PC-9 (cell line): ENCODE measurements at regions of chr18 and their contacts with region 1.

Region 1: DNA sequence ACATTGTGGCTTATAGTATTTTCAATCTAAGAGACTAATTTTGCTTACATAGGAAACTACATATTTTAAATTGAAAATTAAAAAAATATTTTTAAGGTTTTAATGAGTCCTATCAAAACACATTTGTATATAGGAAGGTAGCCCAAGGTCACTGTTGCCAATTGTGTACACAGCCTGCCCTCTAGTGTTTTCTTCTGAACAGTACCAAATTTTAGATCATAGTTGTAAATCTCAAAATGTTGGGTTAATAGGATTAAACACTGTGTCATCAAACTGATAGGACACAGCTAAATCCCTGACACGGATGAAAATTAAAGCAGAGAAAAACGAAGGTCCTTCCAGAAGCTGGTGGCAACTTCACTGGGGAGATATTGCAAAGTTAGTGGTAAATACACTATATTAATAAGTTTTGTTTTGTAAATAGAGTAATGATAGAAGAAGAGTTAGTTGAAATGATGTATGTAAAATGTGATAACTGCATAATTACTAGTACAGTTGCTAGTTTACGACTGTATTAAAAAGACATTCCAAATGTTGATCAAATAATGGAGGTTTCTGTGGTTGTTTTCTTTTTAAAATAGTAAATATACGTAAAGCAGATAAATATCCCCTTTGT is 19.7 kb downstream of the CLUL1 start:
- DNase-seq: no peak
- H3K4me3 ChIP-seq: no peak overlapping the region
- H3K27ac ChIP-seq: no peak overlapping the region
- H3K4me1 ChIP-seq: no peaks in the 10 kb centered on the region
- H3K27me3 ChIP-seq: peaks cover 44% of the 10 kb centered on the region
- CTCF ChIP-seq: peak; percentile 81

Region 2: DNA sequence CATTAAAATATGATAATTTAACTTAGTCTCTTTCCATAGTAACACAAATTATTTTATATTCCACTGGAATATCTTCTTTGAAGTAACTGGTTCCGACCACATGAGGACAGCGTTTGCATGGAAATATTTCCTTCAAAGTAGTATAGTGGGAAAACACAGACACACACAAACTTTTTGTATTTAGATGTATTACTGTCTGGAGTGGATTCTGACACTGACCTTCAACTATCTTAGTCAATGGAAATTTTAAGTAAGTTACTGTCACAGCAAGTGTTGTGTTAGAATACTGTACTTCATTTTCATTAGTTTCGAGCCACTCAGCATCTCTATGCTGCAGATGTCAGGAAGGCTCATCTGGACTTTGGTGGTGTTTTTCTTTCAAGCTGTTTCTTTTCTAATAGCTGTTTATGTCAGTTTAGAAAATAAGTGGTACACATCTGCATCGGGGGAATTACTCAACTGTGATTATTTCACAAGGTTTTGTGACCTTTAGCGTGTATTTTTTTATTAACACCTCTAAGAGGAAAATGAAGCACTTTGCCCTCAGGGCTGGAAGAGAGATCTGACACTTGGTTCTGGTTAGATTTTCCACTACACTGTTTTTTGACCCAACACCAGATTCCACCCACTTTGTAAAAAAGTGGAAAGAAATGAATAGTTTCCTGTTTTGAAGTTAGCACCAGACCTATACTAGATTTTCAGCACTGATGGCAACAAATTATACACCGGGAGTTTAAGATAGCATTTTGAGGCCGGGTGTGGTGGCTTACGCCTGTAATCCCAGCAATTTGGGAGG is 329.8 kb before region 1 on chr18:
- CTCF ChIA-PET with region 1: no interaction called
- POLR2A ChIA-PET with region 1: no interaction called
- intact Hi-C with region 1: loop called (anchors 5 kb)
- DNase-seq: no peak
- H3K4me3 ChIP-seq: no peak overlapping the region
- H3K27ac ChIP-seq: no peak overlapping the region
- H3K4me1 ChIP-seq: no peaks in the 10 kb centered on the region
- H3K27me3 ChIP-seq: peaks cover 79% of the 10 kb centered on the region
- CTCF ChIP-seq: peak; percentile 46

Region 3: DNA sequence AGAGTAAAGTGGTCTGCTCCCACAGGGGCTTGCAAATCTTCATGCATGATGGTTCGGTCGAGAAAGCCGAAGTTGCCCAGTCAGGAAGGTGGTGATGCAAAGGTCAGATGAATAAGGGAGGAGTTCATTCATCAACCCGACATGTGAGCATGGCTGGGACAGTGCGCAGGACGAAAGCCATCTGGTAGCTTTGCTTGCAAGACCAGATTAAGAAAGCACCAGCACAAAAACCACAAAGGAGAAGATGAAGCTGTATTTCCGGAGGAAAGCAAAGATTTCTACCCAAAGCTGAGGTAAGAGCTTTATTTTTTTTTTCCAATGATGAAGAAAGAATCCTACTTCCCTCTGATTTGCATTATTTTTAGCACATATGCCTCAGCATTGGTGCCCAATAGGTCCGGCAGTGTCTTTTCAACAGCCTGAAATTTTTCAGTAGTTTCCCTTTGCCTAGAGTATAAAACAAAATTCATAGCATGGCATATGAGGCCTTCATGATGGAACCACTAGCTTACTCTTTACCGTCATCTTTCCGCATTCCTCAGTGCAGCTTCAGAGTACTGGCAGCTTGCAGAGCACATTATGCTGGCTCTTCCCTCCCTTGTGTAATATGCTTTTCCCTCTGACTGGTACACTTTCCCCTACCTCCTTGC is 236.7 kb before region 1 on chr18:
- CTCF ChIA-PET with region 1: no interaction called
- POLR2A ChIA-PET with region 1: no interaction called
- intact Hi-C with region 1: no loop called
- DNase-seq: no peak
- H3K4me3 ChIP-seq: no peak overlapping the region
- H3K27ac ChIP-seq: no peak overlapping the region
- H3K4me1 ChIP-seq: no peaks in the 10 kb centered on the region
- H3K27me3 ChIP-seq: peaks cover 78% of the 10 kb centered on the region
- CTCF ChIP-seq: no peak

Region 4: GRCh38 chr18:564708-565561 is 51.6 kb before region 1 on chr18:
- CTCF ChIA-PET with region 1: no interaction called
- POLR2A ChIA-PET with region 1: no interaction called
- intact Hi-C with region 1: no loop called
- DNase-seq: no peak
- H3K4me3 ChIP-seq: no peak overlapping the region
- H3K27ac ChIP-seq: no peak overlapping the region
- H3K4me1 ChIP-seq: no peaks in the 10 kb centered on the region
- H3K27me3 ChIP-seq: peaks cover 69% of the 10 kb centered on the region
- CTCF ChIP-seq: no peak

Region 5: DNA sequence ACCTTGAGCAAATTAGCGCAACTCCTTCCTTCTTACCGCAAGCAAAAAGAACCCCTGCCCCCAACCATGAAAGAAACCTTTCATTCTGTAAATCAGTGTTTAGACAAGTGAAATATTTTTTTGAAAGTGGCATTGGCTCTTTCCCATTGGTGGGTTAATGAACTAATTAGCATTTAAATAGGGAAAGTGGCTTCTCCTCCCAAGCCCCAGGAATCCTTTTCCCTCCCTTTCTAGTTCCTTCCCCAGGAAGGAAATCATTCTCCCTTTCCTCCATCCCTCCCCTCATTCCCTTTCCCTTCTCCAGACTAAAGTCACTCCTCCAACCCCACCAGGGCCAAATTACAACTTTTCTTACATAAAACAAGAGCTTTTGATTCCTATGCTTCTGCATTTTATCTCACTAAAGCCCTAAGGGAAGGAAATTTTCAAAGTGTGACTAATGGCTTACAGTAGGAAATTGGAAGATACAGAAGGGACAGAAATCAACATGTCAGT is 18.1 kb after region 1 on chr18:
- CTCF ChIA-PET with region 1: no interaction called
- POLR2A ChIA-PET with region 1: no interaction called
- intact Hi-C with region 1: no loop called
- DNase-seq: no peak
- H3K4me3 ChIP-seq: no peak overlapping the region
- H3K27ac ChIP-seq: no peak overlapping the region
- H3K4me1 ChIP-seq: no peaks in the 10 kb centered on the region
- H3K27me3 ChIP-seq: no peaks in the 10 kb centered on the region
- CTCF ChIP-seq: no peak

Region 6: DNA sequence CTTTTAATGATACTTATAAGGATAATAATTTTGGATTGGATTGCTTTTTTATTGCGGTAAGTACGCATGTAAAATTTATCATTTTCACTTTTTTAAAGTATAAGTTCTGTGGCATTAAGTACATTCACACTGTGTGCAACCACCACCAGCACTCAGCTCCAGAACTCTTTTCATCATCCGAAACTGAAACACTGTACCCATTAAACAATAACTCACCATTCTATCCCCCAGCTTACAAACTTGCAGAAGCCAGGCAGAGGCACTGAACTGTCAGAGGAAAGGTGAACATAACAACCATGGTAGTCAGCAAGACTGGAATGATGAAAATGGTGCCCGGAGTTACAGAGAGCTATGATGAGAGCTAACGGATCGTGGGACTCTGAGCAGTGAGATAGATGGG is 754.1 kb after region 1 on chr18:
- CTCF ChIA-PET with region 1: no interaction called
- POLR2A ChIA-PET with region 1: no interaction called
- intact Hi-C with region 1: no loop called
- DNase-seq: no peak
- H3K4me3 ChIP-seq: no peak overlapping the region
- H3K27ac ChIP-seq: no peak overlapping the region
- H3K4me1 ChIP-seq: no peaks in the 10 kb centered on the region
- H3K27me3 ChIP-seq: no peaks in the 10 kb centered on the region
- CTCF ChIP-seq: no peak